Esophagus squamous epithelium (tissue), 5 donors: ENCODE measurements at regions of chr1 and their contacts with region 1.

Region 1: DNA sequence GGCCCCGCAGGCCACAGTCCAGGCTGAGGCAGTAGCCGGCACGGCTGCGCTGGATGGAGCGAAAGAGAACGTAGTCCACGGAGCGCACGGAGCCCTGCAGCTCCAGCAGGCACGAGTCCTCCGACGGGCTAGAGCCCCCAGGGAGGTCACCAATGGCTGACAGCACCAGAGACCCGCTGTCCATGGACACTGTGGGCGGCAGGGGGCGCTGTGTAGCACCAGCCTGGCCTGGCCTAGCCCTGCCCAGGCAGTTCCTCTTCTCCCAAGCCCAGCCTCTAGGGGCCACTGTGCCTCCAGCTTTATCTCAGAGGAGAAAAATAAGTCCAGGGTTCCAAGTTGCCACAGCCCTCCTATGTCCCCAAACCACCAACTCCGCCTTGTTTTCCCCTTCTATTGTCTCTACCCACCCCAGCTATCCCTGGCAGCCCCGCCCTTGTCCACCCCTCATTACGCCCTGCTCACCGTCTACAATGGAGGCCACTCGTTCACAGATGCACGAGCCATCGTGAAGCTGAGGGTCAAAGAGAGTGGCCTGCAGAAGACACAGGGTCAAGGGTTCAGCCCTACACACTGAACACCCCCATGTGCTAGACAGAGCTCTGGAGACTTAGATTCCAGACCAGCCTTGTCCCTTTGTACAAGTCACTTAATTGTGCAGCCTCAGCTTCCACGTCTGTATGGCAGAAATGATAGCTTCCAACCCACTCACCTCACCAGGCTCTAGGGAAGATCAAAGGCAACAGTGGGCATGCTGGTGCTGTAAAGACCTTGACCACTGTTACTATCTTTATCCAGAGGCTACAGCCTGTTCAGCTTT is 4.4 kb downstream of the ENTREP3 start:
- DNase-seq: peak; percentile 49
- H3K4me3 ChIP-seq: peak overlapping the region in 3 of 4 donors; percentile 9 to 54 (median 29)
- H3K27ac ChIP-seq: peak overlapping the region; percentile 19 to 64 (median 54)
- H3K4me1 ChIP-seq: peaks cover 26 to 41% (median 28%) of the 10 kb centered on the region in 3 donors
- H3K27me3 ChIP-seq: no peaks in the 10 kb centered on the region
- CTCF ChIP-seq: peak; percentile 98 to 100 (median 98)
- POLR2A ChIP-seq: no peak

Region 2: GRCh38 chr1:154878371-154879022 is 372.3 kb before region 1 on chr1:
- intact Hi-C with region 1: no loop called
- DNase-seq: no peak
- H3K4me3 ChIP-seq: no peak overlapping the region
- H3K27ac ChIP-seq: no peak overlapping the region
- H3K4me1 ChIP-seq: peaks cover 0 to 7% (median 3%) of the 10 kb centered on the region in 3 donors
- H3K27me3 ChIP-seq: peaks cover 0 to 8% (median 0%) of the 10 kb centered on the region in 4 donors
- CTCF ChIP-seq: peak; percentile 80 to 89 (median 83)
- POLR2A ChIP-seq: no peak

Region 3: GRCh38 chr1:155158979-155159378 is 91.9 kb before region 1 on chr1:
- intact Hi-C with region 1: no loop called
- DNase-seq: no peak
- H3K4me3 ChIP-seq: no peak overlapping the region
- H3K27ac ChIP-seq: no peak overlapping the region
- H3K4me1 ChIP-seq: no peaks in the 10 kb centered on the region
- H3K27me3 ChIP-seq: no peaks in the 10 kb centered on the region
- CTCF ChIP-seq: no peak
- POLR2A ChIP-seq: no peak

Region 4: GRCh38 chr1:155277070-155277895 is 26.4 kb after region 1 on chr1 and contains the start of gene HCN3:
- intact Hi-C with region 1: no loop called
- DNase-seq: peak; percentile 68
- H3K4me3 ChIP-seq: peak within 1 kb of the TSS; percentile 69 to 80 (median 78)
- H3K27ac ChIP-seq: peak within 1 kb of the TSS; percentile 73 to 87 (median 81)
- H3K4me1 ChIP-seq: peaks cover 15 to 33% (median 32%) of the 10 kb centered on the region in 3 donors
- H3K27me3 ChIP-seq: no peaks in the 10 kb centered on the region
- CTCF ChIP-seq: peak; percentile 60 to 80 (median 66)
- POLR2A ChIP-seq: no peak
- total RNA-seq, gene HCN3: 2.1 to 3.0 (median 2.5) TPM

Region 5: DNA sequence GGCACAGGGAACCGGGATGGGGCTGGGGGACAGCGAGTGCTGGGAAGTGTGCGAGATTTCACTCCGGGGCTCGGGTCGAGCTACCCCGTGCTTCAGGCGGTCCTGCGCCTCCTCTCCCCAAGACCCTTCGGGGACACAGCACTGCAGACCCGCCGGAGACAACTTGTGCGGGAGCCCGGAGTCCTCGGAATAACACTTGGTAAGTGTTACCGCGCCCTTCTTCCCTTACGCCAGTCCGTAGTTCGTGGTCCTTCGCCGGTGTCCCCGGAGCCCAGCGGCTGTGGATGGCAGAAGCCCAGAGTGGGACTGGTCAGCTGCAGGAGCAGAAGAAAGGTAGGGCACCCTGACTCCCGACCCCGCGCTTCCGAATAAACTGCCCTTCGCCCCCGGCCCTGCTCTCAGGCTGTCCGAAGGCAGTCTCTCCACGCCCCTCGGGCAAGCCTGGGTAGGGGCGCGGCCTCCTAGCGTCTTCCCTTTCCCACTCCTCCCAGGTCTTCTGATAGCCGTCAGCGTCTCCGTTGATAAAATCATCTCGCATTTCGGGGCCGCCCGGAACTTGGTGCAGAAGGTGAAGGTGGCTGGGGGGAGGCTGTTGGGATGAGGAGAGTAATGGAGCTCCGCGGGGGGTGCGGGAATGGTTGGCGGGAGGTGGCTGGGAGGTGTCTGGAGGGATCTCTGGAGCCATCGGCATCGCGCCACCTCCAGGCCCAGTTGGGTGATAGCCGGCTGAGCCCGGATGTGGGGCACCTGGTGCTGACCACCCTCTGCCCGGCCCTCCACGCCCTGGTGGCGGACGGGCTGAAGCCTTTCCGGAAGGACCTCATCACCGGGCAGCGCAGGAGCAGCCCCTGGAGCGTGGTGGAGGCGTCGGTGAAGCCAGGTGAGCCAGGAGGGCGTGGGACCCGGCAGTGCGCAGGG is 74.0 kb after region 1 on chr1:
- intact Hi-C with region 1: loop called (anchors 5 kb)
- DNase-seq: no peak
- H3K4me3 ChIP-seq: peak overlapping the region; percentile 61 to 95 (median 80)
- H3K27ac ChIP-seq: peak overlapping the region; percentile 96 to 99 (median 98)
- H3K4me1 ChIP-seq: peaks cover 35 to 56% (median 36%) of the 10 kb centered on the region in 3 donors
- H3K27me3 ChIP-seq: no peaks in the 10 kb centered on the region
- CTCF ChIP-seq: peak in 5 of 6 experiments; percentile 27 to 61 (median 36)
- POLR2A ChIP-seq: no peak